Activated naive CD4-positive, alpha-beta T cell treated with anti-CD3 and anti-CD28 coated beads for 36 hours (primary cell): ENCODE measurements at regions of chr4 and their contacts with region 1.

Region 1: DNA sequence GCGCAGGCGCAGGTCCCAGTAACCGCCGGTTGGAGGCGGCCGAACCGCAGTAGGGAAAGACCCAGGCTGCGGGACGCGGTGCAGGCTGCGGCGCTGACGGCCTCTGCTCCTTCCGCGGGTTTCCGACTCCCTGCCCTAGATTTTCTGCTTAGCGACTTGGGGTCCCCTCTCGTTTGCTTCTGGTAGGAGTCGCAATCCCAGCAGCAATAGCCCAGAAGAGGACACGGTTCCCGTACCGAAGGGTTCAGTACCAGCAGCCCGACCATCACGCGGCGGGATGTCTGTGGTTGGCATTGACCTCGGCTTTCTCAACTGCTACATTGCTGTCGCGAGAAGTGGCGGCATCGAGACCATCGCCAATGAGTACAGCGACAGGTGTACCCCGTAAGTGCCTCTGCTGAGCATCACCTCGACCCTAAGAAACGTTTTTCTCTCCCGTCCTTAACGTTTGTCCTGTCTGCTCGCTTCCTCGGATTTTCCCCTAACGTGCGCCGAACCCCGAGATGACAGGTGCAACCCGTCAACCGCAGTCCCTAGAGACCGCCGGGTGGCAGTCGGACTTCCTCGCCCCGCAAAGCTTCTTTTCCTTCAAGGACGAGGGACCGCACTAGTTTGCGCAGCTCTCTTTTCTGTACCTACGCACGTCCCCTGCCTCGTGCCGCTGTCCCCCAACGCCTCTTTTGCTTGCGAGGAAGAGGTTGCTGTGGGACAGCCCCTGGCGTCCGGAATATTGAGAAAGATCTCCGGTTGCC is at the start of gene HSPA4L:
- DNase-seq: peak; percentile 78
- H3K4me3 Mint-ChIP-seq: peak within 1 kb of the TSS; percentile 86
- H3K27ac Mint-ChIP-seq: peak within 1 kb of the TSS; percentile 80
- H3K4me1 Mint-ChIP-seq: peaks cover 17% of the 10 kb centered on the region
- H3K27me3 Mint-ChIP-seq: peaks cover 56% of the 10 kb centered on the region
- total RNA-seq, gene HSPA4L: 2.6 to 2.8 TPM

Region 2: DNA sequence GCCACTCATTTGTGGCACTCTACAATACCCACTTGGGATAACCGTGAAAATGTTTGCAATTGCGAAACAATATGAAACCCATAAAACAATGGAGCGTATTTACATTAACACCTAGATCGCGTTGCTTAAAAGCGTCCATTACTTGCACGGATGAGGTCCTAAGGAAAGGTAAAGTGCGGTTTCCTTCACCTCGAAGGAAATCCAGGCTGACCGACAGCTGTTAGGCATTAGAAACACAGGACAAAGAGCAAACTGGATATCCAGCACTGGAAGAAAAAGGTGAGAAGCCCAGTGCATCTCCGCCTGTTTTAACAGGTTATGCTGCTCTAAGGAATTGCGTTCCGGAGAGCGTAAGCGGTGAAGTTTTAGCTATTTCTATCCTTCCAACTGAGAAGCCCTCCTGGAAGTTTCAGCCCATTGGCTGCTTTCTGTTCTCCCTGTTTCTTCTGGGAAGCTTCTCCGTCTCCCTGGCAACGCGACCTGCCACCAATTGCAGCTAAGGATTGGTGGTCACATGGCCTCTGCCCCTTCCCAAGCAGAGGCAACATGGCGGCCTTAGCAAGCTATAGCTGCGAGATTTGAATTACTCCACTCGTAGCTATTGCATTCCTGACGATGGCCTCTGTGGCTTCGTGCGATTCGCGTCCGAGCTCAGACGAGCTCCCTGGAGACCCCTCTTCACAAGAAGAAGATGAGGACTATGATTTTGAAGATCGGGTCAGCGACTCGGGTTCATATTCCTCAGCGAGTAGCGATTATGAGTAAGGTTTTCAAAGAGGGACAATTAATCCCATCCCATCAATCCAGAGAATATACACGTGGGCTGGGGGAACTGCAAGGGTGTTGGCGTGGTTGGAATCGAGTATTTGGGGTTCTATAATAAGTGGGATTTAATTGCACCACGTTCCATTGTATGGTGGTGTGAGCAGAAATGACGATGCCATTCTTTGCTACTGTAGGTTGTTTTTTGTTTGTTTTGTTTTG is 149.7 kb before region 1 on chr4 and contains the start of gene INTU:
- CTCF ChIA-PET with region 1: no interaction called
- intact Hi-C with region 1: loop called (anchors 2 kb)
- DNase-seq: peak; percentile 61
- H3K4me3 Mint-ChIP-seq: peak within 1 kb of the TSS; percentile 78
- H3K27ac Mint-ChIP-seq: no peak within 1 kb of the TSS
- H3K4me1 Mint-ChIP-seq: peaks cover 12% of the 10 kb centered on the region
- H3K27me3 Mint-ChIP-seq: peaks cover 51% of the 10 kb centered on the region
- total RNA-seq, gene INTU: 0.12 to 0.52 TPM

Region 3: GRCh38 chr4:127880764-127881562 is 98.5 kb after region 1 on chr4 and contains the start of gene PLK4:
- CTCF ChIA-PET with region 1: no interaction called
- intact Hi-C with region 1: loop called (anchors 1 kb)
- DNase-seq: peak; percentile 97
- H3K4me3 Mint-ChIP-seq: peak within 1 kb of the TSS; percentile 98
- H3K27ac Mint-ChIP-seq: peak within 1 kb of the TSS; percentile 98
- H3K4me1 Mint-ChIP-seq: peaks cover 18% of the 10 kb centered on the region
- H3K27me3 Mint-ChIP-seq: peaks cover 3% of the 10 kb centered on the region
- total RNA-seq, gene PLK4: 44.7 to 52.3 TPM

Region 4: DNA sequence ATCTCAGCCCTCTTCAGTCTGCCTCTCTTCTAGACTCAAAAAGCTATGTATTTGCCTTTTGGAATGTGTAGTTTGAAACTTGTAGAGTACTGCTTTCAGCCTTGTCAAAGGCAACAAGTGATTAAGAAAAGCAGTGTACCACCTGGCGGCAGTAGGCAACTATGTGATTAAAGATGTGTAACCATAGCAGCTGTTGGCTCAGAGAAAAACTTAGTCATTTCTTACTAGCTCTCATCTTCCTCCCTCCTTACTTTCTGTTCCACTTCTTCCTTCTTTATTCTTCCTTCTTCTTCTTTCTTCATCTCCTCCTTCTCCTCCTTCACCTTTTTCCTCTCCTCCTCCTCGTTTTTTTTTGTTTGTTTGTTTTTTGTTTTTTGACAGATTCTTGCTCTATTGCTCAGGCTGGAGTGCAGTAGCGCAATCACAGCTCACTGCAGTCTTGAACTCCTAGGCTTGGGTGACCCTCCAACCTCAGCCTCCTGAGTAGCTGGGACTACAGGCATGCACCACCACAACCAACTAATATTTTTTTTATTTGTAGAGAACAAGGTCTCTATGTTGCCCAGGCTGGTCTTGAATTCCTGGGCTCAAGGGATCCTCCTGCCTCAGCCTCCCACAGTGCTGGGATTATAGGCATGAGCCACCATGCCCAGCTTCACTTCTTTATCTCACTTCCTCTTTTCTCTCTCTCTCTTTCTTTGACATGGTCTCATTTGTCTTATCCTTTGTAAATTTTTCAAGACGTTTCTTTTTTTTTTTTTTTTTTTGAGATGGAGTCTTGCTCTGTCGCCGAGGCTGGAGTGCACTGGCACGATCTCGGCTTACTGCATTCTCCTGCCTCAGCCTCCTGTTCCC is 215.3 kb after region 1 on chr4:
- CTCF ChIA-PET with region 1: no interaction called
- intact Hi-C with region 1: loop called (anchors 5 kb)
- DNase-seq: peak; percentile 67
- H3K4me3 Mint-ChIP-seq: no peak overlapping the region
- H3K27ac Mint-ChIP-seq: peak overlapping the region; percentile 62
- H3K4me1 Mint-ChIP-seq: peaks cover 32% of the 10 kb centered on the region
- H3K27me3 Mint-ChIP-seq: no peaks in the 10 kb centered on the region

Region 5: DNA sequence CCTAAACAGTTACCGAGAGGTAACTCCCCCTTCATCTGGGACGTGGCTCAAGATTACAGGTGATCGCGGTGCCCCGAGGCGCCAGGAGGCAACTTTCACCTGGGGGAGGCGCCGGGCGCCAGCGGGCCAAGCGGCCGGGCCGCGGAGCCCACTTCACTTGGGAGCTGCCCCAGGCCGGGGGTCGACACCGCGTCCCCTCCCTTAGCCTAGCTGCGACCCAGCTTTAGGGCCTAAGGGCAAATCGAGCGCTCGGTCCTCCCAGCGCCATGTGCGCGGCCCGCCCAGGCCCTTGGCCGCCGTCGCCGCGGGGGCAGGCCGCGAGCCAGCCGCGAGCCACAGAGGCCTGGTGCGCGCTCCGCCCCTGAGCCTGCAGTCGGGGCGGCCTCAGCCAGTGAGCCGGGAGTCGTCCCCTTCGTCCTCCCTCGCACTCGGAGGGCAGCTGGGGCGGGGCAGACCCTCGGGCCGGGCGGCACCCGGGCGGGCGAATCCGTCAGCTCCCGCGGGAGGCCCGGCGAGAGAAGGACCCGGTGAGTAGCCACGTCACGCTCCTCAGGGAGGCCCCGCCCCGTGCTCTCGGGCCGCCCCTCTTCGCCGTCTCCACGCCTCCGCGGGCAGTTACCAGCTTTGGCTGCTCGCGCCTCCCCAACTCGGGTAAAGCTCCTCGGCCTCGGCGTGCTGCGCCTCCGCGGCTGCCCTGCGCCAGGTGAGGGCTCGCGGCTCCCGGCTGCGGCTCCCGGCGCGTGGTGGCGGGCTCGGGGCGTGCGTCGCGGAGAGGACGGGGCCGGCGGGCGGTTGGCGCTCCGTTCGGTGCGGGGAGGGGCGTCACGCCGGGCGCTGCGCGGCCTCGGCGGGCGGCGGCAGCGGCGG is 278.5 kb after region 1 on chr4 and contains the start of gene LARP1B:
- CTCF ChIA-PET with region 1: no interaction called
- intact Hi-C with region 1: loop called (anchors 1 kb)
- DNase-seq: peak; percentile 94
- H3K4me3 Mint-ChIP-seq: peak within 1 kb of the TSS; percentile 82
- H3K27ac Mint-ChIP-seq: peak within 1 kb of the TSS; percentile 81
- H3K4me1 Mint-ChIP-seq: peaks cover 16% of the 10 kb centered on the region
- H3K27me3 Mint-ChIP-seq: no peaks in the 10 kb centered on the region
- total RNA-seq, gene LARP1B: 17.6 to 18.9 TPM

Region 6: GRCh38 chr4:128379860-128380259 is 597.4 kb after region 1 on chr4:
- CTCF ChIA-PET with region 1: no interaction called
- intact Hi-C with region 1: no loop called
- DNase-seq: peak; percentile 24
- H3K4me3 Mint-ChIP-seq: no peak overlapping the region
- H3K27ac Mint-ChIP-seq: no peak overlapping the region
- H3K4me1 Mint-ChIP-seq: peaks cover 2% of the 10 kb centered on the region
- H3K27me3 Mint-ChIP-seq: no peaks in the 10 kb centered on the region